ENCODE measurements at regions of chr10 and their contacts with region 1.

Region 1: DNA sequence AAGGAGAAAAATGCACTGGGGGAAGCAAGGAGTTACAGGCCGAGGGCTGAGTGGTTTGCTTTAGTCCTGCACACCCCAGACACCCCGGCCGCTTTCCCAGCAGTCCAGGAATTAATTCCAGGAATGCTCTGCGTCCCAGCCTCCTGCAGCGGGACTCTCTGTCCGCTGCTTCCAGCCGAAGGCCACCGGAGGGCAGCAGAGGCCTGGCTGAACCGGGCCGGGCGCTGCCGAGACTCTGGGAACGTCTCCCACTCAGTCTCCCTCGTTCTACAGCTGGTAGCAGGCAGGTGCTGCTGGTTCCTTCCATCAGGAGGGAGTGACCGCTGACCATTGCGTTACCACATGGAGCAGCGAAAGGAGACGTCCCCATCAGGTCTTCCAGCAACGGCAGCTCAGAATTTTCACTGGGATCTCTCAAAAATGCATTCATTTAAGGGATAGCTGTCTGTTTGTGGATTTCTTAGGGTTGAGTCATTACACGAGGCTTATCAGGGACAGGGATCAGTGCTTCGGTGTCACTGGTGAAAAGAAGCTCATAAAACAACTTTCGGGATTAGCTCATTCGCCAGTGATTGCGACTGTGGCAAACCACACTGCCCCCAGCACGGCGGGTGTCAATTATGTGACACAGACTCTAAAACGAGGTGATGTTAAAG is 24.9 kb upstream of the PITRM1 start:
- DNase-seq: peak; percentile 91
- H3K4me3 ChIP-seq: peak overlapping the region; percentile 4 to 43 (median 15)
- H3K27ac ChIP-seq: peak overlapping the region in 6 of 8 donors; percentile 45 to 69 (median 60)
- H3K4me1 ChIP-seq: peaks cover 7 to 30% (median 16%) of the 10 kb centered on the region in 6 donors
- H3K27me3 ChIP-seq: peaks cover 0 to 34% (median 3%) of the 10 kb centered on the region in 7 donors
- CTCF ChIP-seq: peak; percentile 51 to 93 (median 80)
- POLR2A ChIP-seq: no peak

Region 2: DNA sequence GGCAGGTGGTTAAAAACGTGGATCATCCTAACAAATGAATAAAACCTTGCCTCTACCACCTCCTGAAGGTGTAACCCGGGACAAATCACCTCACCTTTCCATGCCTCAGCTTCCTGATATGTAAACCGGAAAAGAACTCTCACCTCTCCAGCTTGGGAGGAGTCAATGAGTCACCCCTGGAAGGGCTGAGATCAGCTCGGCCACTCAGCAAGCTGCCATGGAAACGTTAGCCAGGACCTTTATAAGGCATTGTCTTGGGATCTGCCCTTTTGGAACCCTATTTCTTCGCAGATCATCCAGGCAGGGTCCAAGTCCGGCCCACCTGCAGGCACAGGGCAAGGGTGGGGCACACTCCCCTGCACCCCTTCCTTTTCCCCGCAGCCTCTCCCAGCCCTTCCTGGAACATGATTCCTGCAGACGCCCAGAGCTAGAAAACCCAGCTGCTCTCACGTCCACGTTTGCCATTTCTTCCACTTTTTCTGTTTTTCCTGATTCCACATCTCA is 211.7 kb before region 1 on chr10:
- intact Hi-C with region 1: no loop called
- DNase-seq: no peak
- H3K4me3 ChIP-seq: peak overlapping the region in 1 of 8 donors; percentile 36
- H3K27ac ChIP-seq: no peak overlapping the region
- H3K4me1 ChIP-seq: peaks cover 0 to 15% (median 8%) of the 10 kb centered on the region in 6 donors
- H3K27me3 ChIP-seq: peaks cover 0 to 63% (median 10%) of the 10 kb centered on the region in 7 donors
- CTCF ChIP-seq: no peak
- POLR2A ChIP-seq: no peak

Region 3: GRCh38 chr10:3398825-3399646 is 201.6 kb after region 1 on chr10:
- intact Hi-C with region 1: no loop called
- DNase-seq: peak; percentile 72
- H3K4me3 ChIP-seq: no peak overlapping the region
- H3K27ac ChIP-seq: peak overlapping the region in 5 of 8 donors; percentile 4 to 74 (median 67)
- H3K4me1 ChIP-seq: peaks cover 0 to 14% (median 0%) of the 10 kb centered on the region in 6 donors
- H3K27me3 ChIP-seq: no peaks in the 10 kb centered on the region
- CTCF ChIP-seq: no peak
- POLR2A ChIP-seq: no peak

Region 4: DNA sequence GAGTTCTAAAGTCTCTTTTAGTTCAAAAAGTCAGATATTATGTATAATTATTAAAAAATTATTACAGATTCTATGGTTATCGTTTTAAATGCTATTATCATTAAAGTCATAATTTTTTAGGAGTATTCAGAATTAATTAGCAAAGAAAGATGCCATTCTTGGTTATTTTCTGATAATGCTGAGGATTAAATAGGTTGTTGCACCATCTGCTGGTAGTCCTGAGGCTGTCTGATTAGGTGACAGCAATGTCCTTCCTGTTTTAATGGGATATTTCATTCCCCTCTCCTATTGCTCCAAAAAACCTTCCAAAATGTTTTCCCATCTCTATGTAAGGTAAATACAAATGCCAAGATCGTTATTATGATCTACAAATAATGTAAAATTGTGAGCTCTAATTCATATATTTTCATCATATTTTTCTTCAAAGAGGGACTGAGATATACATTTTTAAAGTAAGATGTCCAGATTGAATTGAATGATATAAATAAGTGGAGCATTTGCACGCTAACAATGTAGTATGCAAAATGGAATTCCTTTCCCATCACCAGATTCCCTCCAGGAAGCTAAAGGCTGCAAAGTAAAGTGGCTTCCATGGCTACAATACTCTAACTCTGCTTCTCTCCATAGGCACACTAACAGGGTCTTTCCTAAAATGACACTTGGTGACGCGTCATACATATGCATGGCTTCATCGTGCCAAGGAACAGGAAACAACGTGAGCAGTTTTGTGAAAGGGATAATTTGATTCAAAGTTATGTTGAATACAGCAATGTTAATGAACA is 1569.7 kb after region 1 on chr10:
- intact Hi-C with region 1: loop called (anchors 10 kb)
- DNase-seq: no peak
- H3K4me3 ChIP-seq: no peak overlapping the region
- H3K27ac ChIP-seq: no peak overlapping the region
- H3K4me1 ChIP-seq: peaks cover 0 to 12% (median 4%) of the 10 kb centered on the region in 6 donors
- H3K27me3 ChIP-seq: no peaks in the 10 kb centered on the region
- CTCF ChIP-seq: peak; percentile 19 to 69 (median 59)
- POLR2A ChIP-seq: no peak

Measured in spleen (tissue), 13 donors.